Activated CD8-positive, alpha-beta memory T cell treated with anti-CD3 and anti-CD28 coated beads, Interleukin-2, amount 10 ng/mL, durations not matched to agents 7 days and 5 days (primary cell): ENCODE measurements at regions of chr4 and their contacts with region 1.

Region 1: GRCh38 chr4:10164877-10165283 is 48.3 kb upstream of the WDR1 start:
- DNase-seq: no peak
- ATAC-seq: no peak
- H3K4me3 Mint-ChIP-seq: no peak overlapping the region
- H3K27ac Mint-ChIP-seq: no peak overlapping the region
- H3K4me1 Mint-ChIP-seq: peaks cover 28% of the 10 kb centered on the region
- H3K27me3 Mint-ChIP-seq: peaks cover 2% of the 10 kb centered on the region

Region 2: GRCh38 chr4:10135260-10135659 is 29.6 kb before region 1 on chr4:
- CTCF ChIA-PET with region 1: no interaction called
- DNase-seq: no peak
- ATAC-seq: no peak
- H3K4me3 Mint-ChIP-seq: no peak overlapping the region
- H3K27ac Mint-ChIP-seq: no peak overlapping the region
- H3K4me1 Mint-ChIP-seq: no peaks in the 10 kb centered on the region
- H3K27me3 Mint-ChIP-seq: no peaks in the 10 kb centered on the region

Region 3: DNA sequence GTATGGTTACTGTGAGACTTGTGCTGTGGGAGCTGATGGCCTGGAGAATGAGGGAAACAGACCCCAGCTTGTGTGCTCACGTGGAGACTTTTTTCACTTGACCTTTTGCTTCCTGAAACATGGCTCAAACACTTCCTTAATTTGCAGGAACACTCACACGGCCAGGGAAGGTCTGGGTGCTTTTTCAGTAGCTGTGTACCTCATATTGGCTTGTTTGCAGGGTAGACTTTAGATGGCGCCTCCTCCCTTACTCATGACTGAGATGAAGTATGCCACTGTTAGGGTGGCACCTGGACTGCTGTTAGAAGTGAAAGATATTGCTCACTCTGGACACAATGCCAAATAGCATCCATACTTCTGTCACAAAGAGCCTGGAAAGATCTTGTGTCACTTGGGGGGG is 27.5 kb after region 1 on chr4:
- CTCF ChIA-PET with region 1: interaction called, 116 read pairs
- DNase-seq: no peak
- ATAC-seq: no peak
- H3K4me3 Mint-ChIP-seq: no peak overlapping the region
- H3K27ac Mint-ChIP-seq: no peak overlapping the region
- H3K4me1 Mint-ChIP-seq: peaks cover 1% of the 10 kb centered on the region
- H3K27me3 Mint-ChIP-seq: peaks cover 9% of the 10 kb centered on the region

Region 4: DNA sequence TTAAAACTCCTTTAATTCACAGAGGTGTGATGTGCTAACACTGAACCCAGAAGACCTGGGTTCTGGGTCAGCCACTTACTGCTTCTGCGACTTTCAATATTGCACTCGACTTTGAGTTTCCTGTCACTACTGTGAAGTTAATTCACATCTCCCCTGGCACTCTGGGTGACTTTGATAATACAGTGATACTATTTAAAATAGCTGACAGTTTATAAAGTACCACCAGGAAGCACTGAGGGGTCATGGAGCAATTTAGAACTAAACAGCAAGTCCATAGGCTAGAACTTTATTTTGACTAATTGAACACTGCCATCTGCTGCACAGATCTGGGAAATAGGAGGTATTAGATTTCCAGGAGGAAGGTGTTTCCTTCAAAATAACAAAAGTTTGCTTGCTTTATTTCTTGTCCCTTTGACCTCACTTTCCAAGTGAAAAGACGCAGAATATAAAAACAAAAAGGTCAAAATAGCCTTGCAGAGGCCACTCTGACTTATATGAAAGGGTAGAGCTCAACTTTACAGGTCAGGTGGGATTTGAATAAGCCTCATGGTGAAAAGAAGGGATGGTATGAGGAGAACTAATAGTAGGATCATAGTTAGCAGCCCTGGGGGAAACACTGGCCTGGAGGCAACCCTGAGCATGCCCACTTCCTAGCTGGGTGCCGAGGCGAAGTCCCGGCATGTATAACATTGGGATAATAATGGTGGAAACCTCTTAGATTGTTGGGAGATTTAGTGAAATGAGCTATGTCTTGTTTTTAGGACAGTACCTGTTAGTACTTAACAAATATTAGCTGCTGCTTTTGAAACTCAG is 239.0 kb after region 1 on chr4:
- CTCF ChIA-PET with region 1: interaction called, 63 read pairs
- DNase-seq: no peak
- ATAC-seq: peak; percentile 47
- H3K4me3 Mint-ChIP-seq: no peak overlapping the region
- H3K27ac Mint-ChIP-seq: no peak overlapping the region
- H3K4me1 Mint-ChIP-seq: no peaks in the 10 kb centered on the region
- H3K27me3 Mint-ChIP-seq: peaks cover 9% of the 10 kb centered on the region